Common myeloid progenitor, CD34-positive (primary cell): ENCODE measurements at regions of chr18 and their contacts with region 1.

Region 1: DNA sequence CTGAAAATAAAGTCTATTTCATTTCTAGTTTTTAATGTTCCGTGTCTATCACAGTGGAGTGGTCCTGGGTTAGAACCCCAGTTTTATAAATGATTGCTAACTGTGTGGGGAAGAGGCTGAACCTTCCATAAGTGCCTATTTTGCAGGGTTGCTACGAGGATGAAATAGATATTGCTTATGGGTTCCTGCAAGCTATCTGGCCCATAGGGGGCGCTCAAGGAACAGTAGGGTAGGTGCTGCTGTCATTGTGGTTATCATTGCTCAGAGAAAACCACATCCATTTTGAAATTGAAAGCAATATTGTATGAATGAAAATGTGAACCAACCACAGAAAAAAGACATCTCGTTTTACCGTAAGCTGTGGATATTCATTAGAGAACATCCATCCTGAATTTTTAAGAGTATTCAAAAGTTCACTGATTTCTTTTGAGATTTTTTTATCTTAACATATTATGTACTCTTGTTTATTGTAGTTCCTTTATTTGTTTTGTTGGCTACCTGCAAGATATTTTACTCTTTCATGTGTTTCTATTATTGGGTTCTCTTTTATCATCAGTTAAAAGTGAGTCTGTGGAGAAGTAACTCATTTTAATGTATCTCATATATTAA is 261.6 kb downstream of the NAPG start:
- DNase-seq: peak; percentile 94 to 97 (median 96)
- H3K4me3 ChIP-seq: peak overlapping the region in 1 of 7 experiments; percentile 30
- H3K27ac ChIP-seq: no peak overlapping the region
- H3K4me1 ChIP-seq: peaks cover 0 to 7% (median 3%) of the 10 kb centered on the region in 4 experiments
- H3K27me3 ChIP-seq: no peaks in the 10 kb centered on the region

Region 2: DNA sequence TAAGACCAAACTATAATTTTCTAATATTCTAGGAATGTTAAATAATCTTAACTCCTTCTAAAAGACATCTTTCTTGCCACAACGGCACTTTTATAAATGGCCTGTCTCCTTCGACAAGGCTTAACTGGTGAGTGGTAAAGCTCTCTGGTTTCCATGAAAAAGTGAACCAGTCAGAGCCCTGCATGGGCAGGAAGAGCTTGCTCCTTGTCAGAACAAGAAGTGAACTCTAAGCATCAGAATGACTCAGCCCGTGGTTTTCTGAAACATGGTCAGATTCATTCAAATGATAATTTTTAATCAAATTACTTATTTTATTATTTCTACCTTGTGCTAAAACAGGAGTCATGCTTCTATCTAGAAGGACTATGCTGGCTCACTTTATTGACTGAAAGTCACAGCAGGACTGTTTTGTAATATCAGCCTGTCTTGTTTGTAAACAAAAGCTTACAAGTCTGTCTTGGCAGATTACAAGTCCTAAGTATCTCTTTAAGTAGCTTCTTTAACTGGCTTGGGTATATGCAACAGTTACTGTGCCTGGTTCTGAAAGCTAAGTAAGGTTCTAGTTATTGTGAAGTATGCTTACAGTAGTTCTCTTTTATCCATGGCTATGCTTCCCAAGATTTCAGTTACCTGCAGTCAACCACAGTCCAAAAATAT is 16.2 kb before region 1 on chr18:
- CTCF ChIA-PET with region 1: interaction called, 11 read pairs
- POLR2A ChIA-PET with region 1: no interaction called
- DNase-seq: peak; percentile 31 to 87 (median 81)
- H3K4me3 ChIP-seq: no peak overlapping the region
- H3K27ac ChIP-seq: no peak overlapping the region
- H3K4me1 ChIP-seq: peaks cover 0 to 5% (median 1%) of the 10 kb centered on the region in 4 experiments
- H3K27me3 ChIP-seq: no peaks in the 10 kb centered on the region